ENCODE measurements at regions of chr15 and their contacts with region 1.

Region 1: DNA sequence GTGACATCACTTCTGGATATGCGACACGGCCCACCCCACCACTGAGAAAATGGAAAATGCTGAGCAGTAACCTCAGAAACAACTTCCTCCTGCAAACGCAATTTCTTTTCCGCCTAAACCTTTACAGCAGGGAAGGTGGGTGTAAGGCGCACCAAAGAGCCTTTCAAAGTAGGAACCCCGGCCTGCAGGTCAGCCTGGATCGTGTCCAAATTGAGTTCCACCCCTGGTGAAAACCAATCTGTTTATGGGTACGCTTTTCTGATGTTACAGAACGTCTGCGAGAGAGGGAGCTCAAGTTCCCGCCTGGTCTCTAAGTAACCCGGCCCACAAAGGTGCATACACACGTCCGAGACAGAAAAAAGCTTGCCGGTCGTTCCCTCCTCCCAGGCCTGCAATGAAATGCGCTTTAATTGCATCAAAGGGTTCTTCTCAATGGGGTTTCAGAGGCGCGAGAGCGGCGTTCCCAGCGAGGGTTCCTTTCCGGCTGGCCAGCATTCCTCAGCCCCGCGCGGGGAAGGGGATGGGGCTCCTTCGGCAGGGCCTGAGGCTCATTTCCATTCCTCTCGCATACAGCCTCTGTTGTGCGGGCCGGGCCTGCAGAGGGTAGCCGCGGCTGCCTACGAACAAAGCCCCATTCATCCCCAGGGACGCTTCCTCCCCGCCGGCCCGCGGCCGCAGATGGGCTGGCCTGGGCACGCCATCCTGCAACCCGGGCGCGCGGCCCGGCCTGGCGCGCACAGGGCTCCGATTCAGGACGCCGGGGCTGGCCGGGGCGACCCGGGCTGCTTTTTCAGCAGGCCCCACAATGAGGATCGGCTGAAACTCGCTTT is 138.1 kb downstream of the TMCO5A start:
- DNase-seq: peak; percentile 74
- H3K4me3 ChIP-seq: peak overlapping the region; percentile 38 to 62 (median 44)
- H3K27ac ChIP-seq: peak overlapping the region; percentile 88 to 95 (median 92)
- H3K4me1 ChIP-seq: peaks cover 3 to 57% (median 33%) of the 10 kb centered on the region in 4 donors
- H3K27me3 ChIP-seq: no peaks in the 10 kb centered on the region
- CTCF ChIP-seq: peak in 2 of 5 experiments; percentile 19 to 22
- EP300 ChIP-seq: no peak
- POLR2A ChIP-seq: peak; percentile 63

Region 2: DNA sequence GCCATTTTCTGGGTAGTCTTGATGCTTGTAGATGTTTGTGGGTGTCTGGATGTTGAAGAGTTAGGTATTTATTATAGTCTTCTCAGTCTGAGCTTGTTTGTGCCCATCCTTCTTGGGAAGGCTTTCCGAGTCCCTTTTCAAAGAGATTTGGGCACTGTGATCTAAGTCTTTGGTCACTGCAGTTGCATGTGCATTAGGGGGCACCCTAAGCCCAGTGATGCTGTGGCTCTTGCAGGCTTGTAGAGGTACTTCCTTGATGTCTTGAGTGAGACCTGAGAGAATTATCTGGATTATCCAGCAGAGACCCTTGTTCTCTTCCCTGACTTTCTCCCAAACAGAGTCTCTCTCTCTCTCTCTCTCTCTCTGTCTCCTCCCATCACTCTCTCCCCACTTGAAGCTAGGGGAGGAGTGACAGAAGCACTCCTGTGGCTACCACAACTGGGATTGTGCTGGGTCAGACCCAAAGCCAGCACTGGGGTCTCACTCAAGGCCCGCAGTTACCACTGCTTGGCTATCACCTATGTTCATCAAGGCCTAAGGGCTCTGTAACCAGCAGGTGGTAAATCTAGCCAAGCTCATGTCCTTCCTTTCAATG is 69.6 kb before region 1 on chr15:
- in situ Hi-C with region 1: loop called in 1 of 4 experiments (anchors 10 kb)
- intact Hi-C with region 1: no loop called
- DNase-seq: peak; percentile 71
- H3K4me3 ChIP-seq: no peak overlapping the region
- H3K27ac ChIP-seq: no peak overlapping the region
- H3K4me1 ChIP-seq: peaks cover 0 to 9% (median 0%) of the 10 kb centered on the region in 4 donors
- H3K27me3 ChIP-seq: no peaks in the 10 kb centered on the region
- CTCF ChIP-seq: peak; percentile 56 to 73 (median 57)
- EP300 ChIP-seq: no peak
- POLR2A ChIP-seq: no peak

Region 3: DNA sequence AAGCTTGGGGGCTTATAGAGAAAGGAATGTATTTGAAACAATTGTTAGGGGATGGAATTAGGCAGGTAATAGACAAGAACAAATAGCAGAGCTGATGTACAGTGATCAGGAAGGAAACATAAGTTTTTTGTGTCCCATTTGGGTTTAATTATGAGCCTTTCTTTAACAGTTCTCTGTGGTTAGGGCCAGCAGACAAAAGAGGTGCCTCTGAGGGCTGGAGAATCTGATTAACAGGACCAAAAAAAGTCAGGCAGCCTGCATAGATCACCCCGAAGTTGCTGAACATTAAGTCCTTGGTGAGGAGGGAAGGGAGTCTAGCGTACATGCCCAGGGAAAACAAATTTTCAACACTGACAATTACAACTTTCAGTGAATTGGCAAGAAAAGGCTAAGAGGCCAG is 91.5 kb after region 1 on chr15:
- in situ Hi-C with region 1: no loop called
- intact Hi-C with region 1: no loop called
- DNase-seq: no peak
- H3K4me3 ChIP-seq: no peak overlapping the region
- H3K27ac ChIP-seq: peak overlapping the region in 2 of 4 donors; percentile 9 to 34
- H3K4me1 ChIP-seq: peaks cover 0 to 20% (median 3%) of the 10 kb centered on the region in 4 donors
- H3K27me3 ChIP-seq: no peaks in the 10 kb centered on the region
- CTCF ChIP-seq: no peak
- EP300 ChIP-seq: no peak
- POLR2A ChIP-seq: no peak

Region 4: GRCh38 chr15:38226608-38227266 is 154.2 kb after region 1 on chr15:
- in situ Hi-C with region 1: loop called in 1 of 4 experiments (anchors 25 kb)
- intact Hi-C with region 1: no loop called
- DNase-seq: peak; percentile 71
- H3K4me3 ChIP-seq: no peak overlapping the region
- H3K27ac ChIP-seq: peak overlapping the region; percentile 14 to 48 (median 34)
- H3K4me1 ChIP-seq: peaks cover 0 to 22% (median 3%) of the 10 kb centered on the region in 4 donors
- H3K27me3 ChIP-seq: no peaks in the 10 kb centered on the region
- CTCF ChIP-seq: no peak
- EP300 ChIP-seq: no peak
- POLR2A ChIP-seq: no peak

Region 5: GRCh38 chr15:38252481-38253412 is 180.2 kb after region 1 on chr15 and contains the start of gene SPRED1:
- in situ Hi-C with region 1: loop called in 1 of 4 experiments (anchors 25 kb)
- intact Hi-C with region 1: loop called (anchors 10 kb)
- DNase-seq: peak; percentile 74
- H3K4me3 ChIP-seq: peak within 1 kb of the TSS; percentile 65 to 95 (median 92)
- H3K27ac ChIP-seq: peak within 1 kb of the TSS; percentile 97 to 99 (median 98)
- H3K4me1 ChIP-seq: peaks cover 0 to 31% (median 20%) of the 10 kb centered on the region in 4 donors
- H3K27me3 ChIP-seq: no peaks in the 10 kb centered on the region
- CTCF ChIP-seq: no peak
- EP300 ChIP-seq: no peak
- POLR2A ChIP-seq: no peak
- total RNA-seq, gene SPRED1: 8.6 to 26.5 (median 10.3) TPM